Naive thymus-derived CD8-positive, alpha-beta T cell (primary cell): ENCODE measurements at regions of chr19 and their contacts with region 1.

Region 1: DNA sequence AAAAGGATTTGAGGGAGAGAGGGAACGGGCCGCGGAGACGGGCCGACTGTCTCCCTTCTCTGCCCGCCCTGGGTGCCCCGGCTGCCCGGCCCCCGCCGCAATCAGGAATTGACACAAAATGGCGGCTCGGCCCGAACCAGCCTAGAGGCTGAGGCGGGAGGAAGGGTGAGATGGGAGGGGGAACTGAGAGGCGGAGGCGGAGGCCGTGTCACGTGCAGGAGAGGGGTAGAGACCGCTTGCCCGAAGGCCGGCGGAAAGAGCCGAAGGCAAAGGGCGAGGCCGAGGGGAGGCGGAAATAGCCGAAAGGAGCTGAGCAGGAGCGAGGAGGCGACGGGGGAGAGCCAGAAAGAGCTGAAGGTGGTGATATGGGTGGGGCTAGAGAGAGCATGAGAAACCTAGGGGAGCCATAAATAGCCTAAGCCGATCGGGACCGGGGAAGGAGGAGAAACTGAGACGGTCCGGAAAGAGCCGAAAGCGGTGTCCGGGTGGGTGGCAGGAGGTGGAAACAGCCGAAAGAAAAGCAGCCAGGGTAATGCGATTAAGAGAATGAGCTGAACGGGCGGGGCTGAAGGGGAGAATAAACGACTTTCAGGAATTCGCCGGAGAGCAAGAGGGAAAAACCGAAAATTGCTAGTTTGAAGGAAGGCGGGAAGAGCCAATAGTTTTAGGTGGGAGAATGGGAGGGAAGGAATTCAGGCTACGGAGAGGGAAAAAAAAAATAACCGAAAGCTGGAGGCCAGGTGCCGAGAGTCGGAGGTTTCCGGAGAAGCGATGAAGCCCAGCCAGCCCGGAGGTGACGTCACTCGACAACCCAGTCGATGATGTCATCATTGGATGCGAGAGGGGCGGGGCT is at the start of gene ZC3H4:
- DNase-seq: peak; percentile 97 to 100 (median 100)
- ATAC-seq: peak; percentile 81 to 84
- H3K4me3 Mint-ChIP-seq: peak within 1 kb of the TSS; percentile 92 to 100 (median 98)
- H3K27ac Mint-ChIP-seq: peak within 1 kb of the TSS; percentile 99 to 100 (median 99)
- H3K4me1 Mint-ChIP-seq: peaks cover 17 to 39% (median 33%) of the 10 kb centered on the region in 4 donors
- H3K27me3 Mint-ChIP-seq: peaks cover 0 to 2% (median 0%) of the 10 kb centered on the region in 5 donors
- polyA plus RNA-seq, gene ZC3H4: 0.86 to 2.4 (median 2.0) TPM

Region 2: GRCh38 chr19:47075179-47075810 is 37.9 kb before region 1 on chr19:
- POLR2A ChIA-PET with region 1: interaction called, 49 read pairs
- DNase-seq: no peak
- ATAC-seq: no peak
- H3K4me3 Mint-ChIP-seq: no peak overlapping the region
- H3K27ac Mint-ChIP-seq: peak overlapping the region in 6 of 10 donors; percentile 46 to 87 (median 80)
- H3K4me1 Mint-ChIP-seq: peaks cover 8 to 17% (median 14%) of the 10 kb centered on the region in 4 donors
- H3K27me3 Mint-ChIP-seq: no peaks in the 10 kb centered on the region

Region 3: DNA sequence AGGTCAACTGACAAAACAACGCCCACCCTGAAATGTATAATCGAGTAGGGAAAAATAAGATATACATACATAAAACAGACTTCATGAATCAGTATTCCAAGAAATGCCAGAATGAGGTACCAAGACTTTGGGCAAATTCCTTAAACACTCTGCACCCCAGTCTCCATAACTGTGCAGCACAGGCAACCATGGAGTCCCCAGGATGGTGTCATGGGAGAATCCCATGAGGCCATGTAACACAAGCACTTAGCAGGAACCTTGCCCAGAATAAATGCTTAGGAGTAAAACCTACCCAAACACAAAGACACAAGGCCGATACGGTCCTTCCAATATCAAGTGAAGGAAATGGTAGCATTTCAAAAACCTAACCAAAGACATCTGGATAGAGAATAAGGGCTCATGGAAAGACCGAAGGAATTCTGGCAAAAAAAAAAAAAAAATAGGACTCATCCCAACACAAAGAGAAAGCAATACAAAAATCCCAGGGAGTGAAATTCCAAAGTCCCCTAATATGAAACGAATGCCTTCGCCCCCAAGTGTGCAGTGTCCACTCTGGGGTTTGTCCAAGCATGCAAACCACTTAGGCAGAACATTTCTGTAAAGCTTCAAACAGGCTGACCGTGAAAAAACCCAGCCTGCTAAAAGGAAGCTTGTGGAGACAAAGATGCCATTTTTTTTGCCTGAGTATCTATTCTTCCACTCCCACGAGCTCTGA is 10.7 kb before region 1 on chr19:
- POLR2A ChIA-PET with region 1: interaction called, 110 read pairs
- DNase-seq: no peak
- ATAC-seq: no peak
- H3K4me3 Mint-ChIP-seq: peak overlapping the region in 2 of 10 donors; percentile 14 to 36
- H3K27ac Mint-ChIP-seq: peak overlapping the region in 4 of 10 donors; percentile 14 to 75 (median 36)
- H3K4me1 Mint-ChIP-seq: peaks cover 26 to 75% (median 48%) of the 10 kb centered on the region in 4 donors
- H3K27me3 Mint-ChIP-seq: no peaks in the 10 kb centered on the region

Region 4: GRCh38 chr19:47157431-47158321 is 44.5 kb after region 1 on chr19:
- POLR2A ChIA-PET with region 1: interaction called, 25 read pairs
- DNase-seq: peak in 6 of 10 donors; percentile 4 to 52 (median 38)
- ATAC-seq: peak; percentile 21 to 23
- H3K4me3 Mint-ChIP-seq: peak overlapping the region; percentile 61 to 91 (median 82)
- H3K27ac Mint-ChIP-seq: peak overlapping the region; percentile 83 to 98 (median 93)
- H3K4me1 Mint-ChIP-seq: peaks cover 28 to 77% (median 65%) of the 10 kb centered on the region in 4 donors
- H3K27me3 Mint-ChIP-seq: no peaks in the 10 kb centered on the region

Region 5: DNA sequence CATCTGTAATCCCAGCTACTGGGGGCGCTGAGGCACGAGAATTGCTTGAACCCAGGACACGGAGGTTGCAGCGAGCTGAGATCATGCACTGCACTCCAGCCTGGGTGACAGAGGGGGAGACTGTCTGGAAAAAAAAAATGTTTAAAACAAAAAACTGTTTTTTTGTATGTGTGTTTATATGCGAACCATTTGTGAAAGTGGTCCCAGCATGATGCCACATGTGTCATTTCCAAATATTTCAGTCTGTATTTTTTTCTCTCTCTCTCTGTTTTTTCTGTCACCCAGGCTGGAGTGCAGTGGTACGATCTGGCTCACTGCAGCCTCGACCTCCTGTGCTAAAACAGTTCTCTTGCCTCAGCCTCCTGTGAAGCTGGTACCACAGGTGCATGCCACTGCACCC is 54.8 kb after region 1 on chr19:
- POLR2A ChIA-PET with region 1: no interaction called
- DNase-seq: no peak
- ATAC-seq: no peak
- H3K4me3 Mint-ChIP-seq: no peak overlapping the region
- H3K27ac Mint-ChIP-seq: peak overlapping the region in 3 of 10 donors; percentile 4 to 31 (median 19)
- H3K4me1 Mint-ChIP-seq: peaks cover 11 to 48% (median 21%) of the 10 kb centered on the region in 4 donors
- H3K27me3 Mint-ChIP-seq: no peaks in the 10 kb centered on the region

Region 6: DNA sequence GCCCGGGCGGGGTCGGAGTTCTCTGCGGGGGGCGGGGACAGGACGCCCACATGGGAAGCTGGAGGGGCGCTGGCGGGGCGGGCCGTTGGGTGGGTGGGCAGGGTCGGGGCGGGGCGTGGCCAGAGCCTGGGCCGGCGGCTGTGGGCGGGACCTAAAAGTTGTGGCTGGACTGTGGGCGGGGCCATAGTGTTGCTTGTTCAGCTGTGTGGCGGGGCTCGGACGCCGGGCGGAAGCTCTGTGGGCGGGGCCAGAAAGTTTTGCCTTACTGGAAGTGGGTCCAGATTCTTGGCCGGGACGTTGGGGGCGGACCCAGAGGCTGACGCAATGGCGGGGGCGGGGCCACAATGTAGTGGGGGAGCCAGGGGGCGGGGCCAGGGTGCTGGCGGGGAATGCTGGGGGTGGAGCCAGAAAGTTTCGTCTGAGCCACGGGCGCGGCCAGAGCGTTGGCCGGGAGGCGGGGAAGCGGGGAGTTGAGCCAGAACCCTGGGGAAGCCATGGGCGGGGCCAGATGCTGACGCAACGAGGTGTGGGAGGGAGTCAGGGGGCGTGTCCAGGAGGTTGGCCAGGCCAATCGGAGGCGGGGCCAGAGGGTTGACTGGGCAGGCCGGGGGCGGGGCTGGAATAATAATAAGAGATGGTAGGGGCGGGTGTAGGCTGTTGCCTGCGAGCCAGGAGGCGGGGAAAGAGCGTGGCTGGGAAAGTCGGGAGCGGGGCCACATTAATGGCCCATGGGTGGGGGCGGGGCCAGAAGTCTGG is 143.6 kb after region 1 on chr19:
- POLR2A ChIA-PET with region 1: interaction called, 43 read pairs
- DNase-seq: peak; percentile 94 to 99 (median 98)
- ATAC-seq: peak; percentile 74 to 82
- H3K4me3 Mint-ChIP-seq: peak overlapping the region; percentile 89 to 97 (median 93)
- H3K27ac Mint-ChIP-seq: peak overlapping the region; percentile 93 to 99 (median 97)
- H3K4me1 Mint-ChIP-seq: peaks cover 38 to 53% (median 45%) of the 10 kb centered on the region in 4 donors
- H3K27me3 Mint-ChIP-seq: no peaks in the 10 kb centered on the region

Region 7: DNA sequence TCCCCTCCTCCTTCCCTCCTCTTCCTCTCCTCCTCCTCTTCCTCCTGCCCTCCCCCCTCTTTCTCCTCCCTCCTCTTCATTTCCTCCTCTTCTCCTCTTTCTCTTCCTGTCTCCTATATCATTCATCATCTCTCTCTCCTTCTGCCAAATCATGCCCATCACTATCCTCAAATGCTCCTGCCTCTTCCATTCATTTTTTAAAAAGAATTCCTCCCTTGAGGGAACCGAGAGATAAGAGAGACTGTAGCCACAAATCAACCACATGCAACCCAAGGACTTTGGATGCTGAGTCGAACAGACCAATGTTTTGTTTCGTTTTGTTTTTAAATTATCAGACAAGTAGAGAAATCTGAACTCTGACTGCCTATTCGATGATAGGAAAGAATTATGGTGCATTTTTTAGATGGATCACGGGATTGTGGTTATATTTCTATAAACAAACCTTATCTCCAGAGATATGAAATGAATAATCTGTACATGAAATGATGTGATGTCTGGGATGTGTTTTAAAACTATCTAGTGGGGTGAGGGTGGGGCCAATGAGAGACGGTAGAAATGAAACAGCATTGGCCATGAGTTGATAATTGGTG is 469.2 kb after region 1 on chr19:
- POLR2A ChIA-PET with region 1: no interaction called
- DNase-seq: peak in 1 of 10 donors; percentile 12
- ATAC-seq: no peak
- H3K4me3 Mint-ChIP-seq: peak overlapping the region; percentile 15 to 84 (median 60)
- H3K27ac Mint-ChIP-seq: peak overlapping the region; percentile 17 to 95 (median 72)
- H3K4me1 Mint-ChIP-seq: peaks cover 19 to 49% (median 34%) of the 10 kb centered on the region in 4 donors
- H3K27me3 Mint-ChIP-seq: peaks cover 0 to 9% (median 0%) of the 10 kb centered on the region in 5 donors